Activated naive CD4-positive, alpha-beta T cell treated with anti-CD3 and anti-CD28 coated beads for 36 hours (primary cell): ENCODE measurements at regions of chr11 and their contacts with region 1.

Region 1: GRCh38 chr11:70467201-70468085 is 69.1 kb downstream of the CTTN start:
- DNase-seq: peak; percentile 77
- H3K4me3 Mint-ChIP-seq: no peak overlapping the region
- H3K27ac Mint-ChIP-seq: no peak overlapping the region
- H3K4me1 Mint-ChIP-seq: peaks cover 2% of the 10 kb centered on the region
- H3K27me3 Mint-ChIP-seq: peaks cover 6% of the 10 kb centered on the region

Region 2: DNA sequence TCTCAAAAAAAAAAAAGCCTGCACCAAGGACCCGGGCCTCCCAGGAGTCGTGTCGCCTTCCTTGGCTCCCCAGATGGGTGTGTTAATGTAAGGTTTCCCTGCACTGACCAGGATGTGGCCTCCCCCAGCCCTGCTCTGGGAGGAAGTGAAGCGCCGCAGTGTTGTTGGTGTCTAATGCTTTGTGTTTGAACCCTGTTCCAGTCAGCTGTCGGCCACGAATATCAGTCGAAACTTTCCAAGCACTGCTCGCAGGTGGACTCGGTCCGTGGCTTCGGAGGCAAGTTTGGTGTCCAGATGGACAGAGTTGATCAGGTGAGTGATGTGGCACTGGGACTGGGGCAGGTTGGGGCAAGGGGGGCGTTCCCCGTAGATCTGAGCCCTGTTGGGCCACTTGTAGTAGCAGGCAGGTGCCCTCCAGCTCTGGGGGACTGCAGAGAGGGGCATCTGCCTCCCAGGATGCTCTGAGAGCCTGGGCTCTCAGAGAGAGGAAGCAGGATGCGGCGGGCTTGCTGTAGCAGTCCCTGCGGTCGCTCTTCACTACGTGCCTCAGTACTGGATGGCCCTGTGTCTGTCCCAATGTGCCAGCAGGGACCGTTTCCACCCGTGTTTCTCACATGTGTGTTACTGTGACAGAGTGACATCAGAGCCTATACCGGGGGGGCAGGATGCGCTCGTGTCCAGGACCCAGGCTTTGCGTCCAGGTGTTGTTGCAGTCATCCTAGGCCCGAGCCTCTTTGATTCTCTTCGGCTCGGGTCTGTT is 52.9 kb before region 1 on chr11:
- CTCF ChIA-PET with region 1: no interaction called
- intact Hi-C with region 1: no loop called
- DNase-seq: no peak
- H3K4me3 Mint-ChIP-seq: no peak overlapping the region
- H3K27ac Mint-ChIP-seq: no peak overlapping the region
- H3K4me1 Mint-ChIP-seq: peaks cover 5% of the 10 kb centered on the region
- H3K27me3 Mint-ChIP-seq: no peaks in the 10 kb centered on the region

Region 3: DNA sequence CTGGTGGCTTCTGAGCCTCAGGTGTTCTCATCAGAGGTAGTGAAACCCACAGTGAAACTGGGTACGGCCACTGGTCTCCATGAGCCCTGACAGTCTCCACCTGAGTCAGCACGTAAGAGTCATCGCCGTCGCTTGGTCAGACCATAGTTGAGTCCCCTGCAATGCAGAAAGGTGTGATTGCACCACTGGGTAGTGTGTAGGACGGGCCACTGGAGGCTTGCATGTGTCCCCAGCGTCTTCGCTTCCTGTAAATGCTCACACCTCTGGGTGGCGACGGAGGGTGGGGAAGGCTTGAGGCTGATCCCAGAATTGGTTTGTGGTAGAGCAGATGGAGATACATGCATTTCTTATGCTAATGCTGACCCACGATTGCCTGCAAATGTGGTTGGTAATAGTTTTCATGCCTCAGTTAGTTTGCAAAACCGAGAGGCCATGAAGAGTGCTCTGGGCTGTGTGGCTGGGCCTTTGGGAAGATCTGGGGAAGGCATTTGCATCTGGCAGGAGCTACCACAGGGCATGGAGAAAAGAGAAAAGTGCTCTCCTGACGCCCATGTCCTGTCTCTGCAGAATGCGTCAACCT is 42.6 kb before region 1 on chr11:
- CTCF ChIA-PET with region 1: no interaction called
- intact Hi-C with region 1: no loop called
- DNase-seq: no peak
- H3K4me3 Mint-ChIP-seq: no peak overlapping the region
- H3K27ac Mint-ChIP-seq: no peak overlapping the region
- H3K4me1 Mint-ChIP-seq: no peaks in the 10 kb centered on the region
- H3K27me3 Mint-ChIP-seq: no peaks in the 10 kb centered on the region

Region 4: GRCh38 chr11:70755410-70756161 is 288.1 kb after region 1 on chr11:
- CTCF ChIA-PET with region 1: interaction called, 11 read pairs
- intact Hi-C with region 1: loop called (anchors 1 kb)
- DNase-seq: peak; percentile 76
- H3K4me3 Mint-ChIP-seq: no peak overlapping the region
- H3K27ac Mint-ChIP-seq: no peak overlapping the region
- H3K4me1 Mint-ChIP-seq: no peaks in the 10 kb centered on the region
- H3K27me3 Mint-ChIP-seq: peaks cover 12% of the 10 kb centered on the region

Region 5: DNA sequence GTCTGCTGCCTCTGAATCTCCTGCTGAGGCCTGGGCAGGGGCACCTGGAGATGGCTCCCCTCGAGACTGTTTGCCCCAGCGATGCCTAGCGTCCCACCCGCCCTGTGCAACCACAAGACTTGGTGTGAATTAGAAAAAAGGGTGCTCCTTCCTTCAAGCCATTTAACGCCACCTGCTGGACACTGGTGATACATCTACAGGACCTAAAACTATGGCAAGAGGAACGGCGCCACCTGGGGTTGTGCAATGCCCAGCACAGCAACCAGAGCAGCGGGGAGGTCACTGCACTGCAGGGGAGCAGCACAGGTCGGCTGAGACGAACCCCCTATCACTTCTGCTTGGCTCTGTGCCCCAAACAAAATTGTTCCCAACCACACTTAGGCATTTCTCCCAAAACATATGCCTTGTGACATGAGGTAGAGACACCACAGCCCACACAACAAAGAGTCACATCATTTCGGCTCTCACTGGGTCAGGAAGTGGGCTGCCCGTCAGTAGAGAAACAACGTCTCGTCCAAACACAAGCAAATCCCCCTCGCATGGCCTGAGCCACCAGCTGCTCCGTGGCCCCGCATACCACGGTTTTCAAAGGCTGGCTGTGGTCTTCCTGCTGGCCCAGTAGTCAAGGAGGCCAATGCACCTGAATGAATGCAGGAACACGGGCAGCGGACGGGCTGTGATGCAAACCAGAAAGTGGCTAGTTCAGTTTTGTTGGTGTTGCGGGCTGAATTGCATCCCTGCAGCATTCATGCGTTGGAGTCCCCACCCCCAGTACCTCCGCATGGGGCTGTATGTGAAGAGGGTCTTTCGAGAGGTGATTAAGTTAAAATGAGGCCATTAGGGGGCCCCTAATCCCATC is 613.0 kb after region 1 on chr11:
- CTCF ChIA-PET with region 1: no interaction called
- intact Hi-C with region 1: loop called (anchors 5 kb)
- DNase-seq: peak; percentile 82
- H3K4me3 Mint-ChIP-seq: no peak overlapping the region
- H3K27ac Mint-ChIP-seq: no peak overlapping the region
- H3K4me1 Mint-ChIP-seq: no peaks in the 10 kb centered on the region
- H3K27me3 Mint-ChIP-seq: peaks cover 13% of the 10 kb centered on the region